ENCODE measurements at regions of chr13 and their contacts with region 1.

Region 1: GRCh38 chr13:38850868-38851626 is 139.6 kb downstream of the STOML3 start:
- DNase-seq: no peak
- ATAC-seq: no peak
- H3K4me3 ChIP-seq: no peak overlapping the region
- H3K27ac ChIP-seq: no peak overlapping the region
- H3K4me1 ChIP-seq: peaks cover 7% of the 10 kb centered on the region
- H3K27me3 ChIP-seq: no peaks in the 10 kb centered on the region
- CTCF ChIP-seq: no peak

Region 2: DNA sequence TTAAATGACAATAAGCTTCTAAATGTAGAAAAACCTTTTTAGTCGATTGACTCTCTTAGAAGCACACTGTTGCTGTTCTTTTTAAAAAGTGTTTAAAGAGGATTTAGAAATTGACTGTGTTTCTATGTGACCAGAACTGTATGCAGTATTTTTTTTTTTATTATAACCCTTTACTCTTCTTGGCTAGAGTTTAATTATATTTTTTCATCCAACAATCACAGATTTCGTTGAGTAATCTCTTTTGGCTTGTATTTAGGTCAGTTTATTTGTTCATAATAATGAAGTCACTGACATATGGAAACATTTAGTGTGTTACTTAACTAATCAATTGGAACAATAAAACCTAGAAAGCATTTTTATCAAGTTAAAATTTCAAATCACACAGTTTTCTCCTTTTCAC is 1765.4 kb before region 1 on chr13:
- intact Hi-C with region 1: loop called in 1 of 2 experiments (anchors 10 kb)
- DNase-seq: no peak
- ATAC-seq: no peak
- H3K4me3 ChIP-seq: no peak overlapping the region
- H3K27ac ChIP-seq: no peak overlapping the region
- H3K4me1 ChIP-seq: no peaks in the 10 kb centered on the region
- H3K27me3 ChIP-seq: no peaks in the 10 kb centered on the region
- CTCF ChIP-seq: no peak

Region 3: GRCh38 chr13:38042771-38043170 is 808.3 kb before region 1 on chr13:
- intact Hi-C with region 1: no loop called
- DNase-seq: no peak
- ATAC-seq: no peak
- H3K4me3 ChIP-seq: no peak overlapping the region
- H3K27ac ChIP-seq: no peak overlapping the region
- H3K4me1 ChIP-seq: no peaks in the 10 kb centered on the region
- H3K27me3 ChIP-seq: no peaks in the 10 kb centered on the region
- CTCF ChIP-seq: no peak